GM13977 (cell line): ENCODE measurements at regions of chr10 and their contacts with region 1.

Region 1: DNA sequence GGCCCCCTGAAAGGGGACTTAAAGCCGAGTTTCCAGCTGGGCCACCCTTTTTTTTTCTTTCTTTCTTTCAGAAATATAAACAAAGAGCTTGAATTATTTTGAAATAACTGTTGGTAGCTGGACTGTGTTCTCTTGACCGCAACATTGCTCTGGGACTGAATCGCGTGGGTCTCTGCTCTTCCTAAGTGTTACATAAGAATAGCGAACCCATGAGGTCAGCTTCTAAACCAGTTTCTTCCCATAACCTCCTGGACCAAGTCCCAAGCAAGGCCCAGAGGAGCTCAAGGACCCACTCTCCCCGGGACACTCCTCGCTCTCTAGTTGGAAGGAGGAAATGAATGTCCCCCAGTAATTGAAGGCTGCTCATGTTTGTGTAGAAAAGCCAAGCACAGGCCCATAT is 91.1 kb downstream of the CXCL12 start:
- DNase-seq: no peak
- CTCF ChIP-seq: no peak

Region 2: GRCh38 chr10:42975558-42976340 is 1318.1 kb before region 1 on chr10:
- in situ Hi-C with region 1: no loop called
- DNase-seq: no peak
- CTCF ChIP-seq: no peak

Region 3: DNA sequence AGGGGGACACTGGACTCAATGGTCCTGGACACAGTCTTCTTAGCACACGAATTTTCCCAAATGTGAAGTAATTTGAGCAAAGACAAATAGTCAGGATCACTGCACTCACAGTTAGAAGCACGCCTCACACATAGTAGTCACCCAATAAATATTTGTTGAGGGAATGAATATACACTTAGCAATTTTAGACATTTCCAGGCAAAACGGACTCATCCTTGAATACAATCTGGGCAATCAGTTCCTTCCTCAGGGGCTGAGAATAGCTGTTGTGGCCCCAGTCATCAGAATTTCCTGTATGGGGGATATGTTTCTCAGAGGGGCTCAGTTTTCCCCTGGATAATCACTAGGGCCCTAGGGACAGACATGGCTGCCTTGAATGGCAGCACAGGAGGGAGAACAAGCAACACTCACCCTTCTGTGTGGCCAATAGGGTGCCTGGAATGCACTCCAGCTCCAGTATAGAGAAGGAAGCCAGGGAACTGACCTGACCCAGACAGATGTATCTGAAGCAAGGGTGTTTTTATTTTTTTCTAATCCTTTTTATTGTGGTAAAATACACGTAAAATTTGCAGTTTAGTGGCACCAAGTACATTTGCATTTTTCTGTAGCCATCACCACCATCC is 362.4 kb before region 1 on chr10:
- in situ Hi-C with region 1: no loop called
- DNase-seq: no peak
- CTCF ChIP-seq: no peak

Region 4: DNA sequence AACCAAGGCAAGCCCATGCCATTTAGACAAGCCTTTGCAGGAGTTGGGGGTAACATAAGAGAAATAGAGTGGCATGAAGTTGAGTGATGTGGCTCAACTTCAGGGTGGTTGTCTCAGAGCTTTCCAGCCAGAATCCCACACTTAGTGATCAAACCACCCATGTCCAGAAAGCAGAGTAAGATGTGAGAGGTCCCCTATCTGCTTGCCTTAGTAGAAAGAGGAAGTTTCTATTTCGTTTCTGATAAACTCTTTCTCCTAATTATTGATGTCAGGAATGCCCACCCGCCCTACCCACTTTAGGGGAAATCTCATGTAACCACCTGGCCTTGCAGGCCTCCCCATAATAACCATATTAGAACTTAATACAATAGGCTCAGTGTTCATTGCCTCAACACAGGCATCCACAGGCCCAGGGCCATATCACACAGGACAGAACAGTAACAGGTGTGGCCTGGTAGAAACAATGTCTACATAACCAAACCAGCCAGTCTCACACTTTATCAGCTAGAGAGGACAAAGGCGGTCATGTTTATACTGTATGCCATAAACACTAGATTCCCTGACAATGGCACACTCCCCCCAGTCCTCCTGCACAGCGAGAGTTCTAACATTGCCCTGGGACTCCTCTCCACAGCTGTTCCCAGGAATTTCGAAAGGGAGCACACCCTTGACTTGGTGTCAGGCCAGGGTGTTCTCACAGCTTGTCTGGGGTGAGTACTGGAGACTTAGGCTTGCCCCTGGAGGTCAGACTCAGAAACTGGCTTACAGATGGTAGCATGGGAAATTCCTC is 273.3 kb before region 1 on chr10:
- in situ Hi-C with region 1: no loop called
- DNase-seq: no peak
- CTCF ChIP-seq: no peak

Region 5: GRCh38 chr10:44167752-44168151 is 126.1 kb before region 1 on chr10:
- in situ Hi-C with region 1: no loop called
- DNase-seq: no peak
- CTCF ChIP-seq: no peak

Region 6: DNA sequence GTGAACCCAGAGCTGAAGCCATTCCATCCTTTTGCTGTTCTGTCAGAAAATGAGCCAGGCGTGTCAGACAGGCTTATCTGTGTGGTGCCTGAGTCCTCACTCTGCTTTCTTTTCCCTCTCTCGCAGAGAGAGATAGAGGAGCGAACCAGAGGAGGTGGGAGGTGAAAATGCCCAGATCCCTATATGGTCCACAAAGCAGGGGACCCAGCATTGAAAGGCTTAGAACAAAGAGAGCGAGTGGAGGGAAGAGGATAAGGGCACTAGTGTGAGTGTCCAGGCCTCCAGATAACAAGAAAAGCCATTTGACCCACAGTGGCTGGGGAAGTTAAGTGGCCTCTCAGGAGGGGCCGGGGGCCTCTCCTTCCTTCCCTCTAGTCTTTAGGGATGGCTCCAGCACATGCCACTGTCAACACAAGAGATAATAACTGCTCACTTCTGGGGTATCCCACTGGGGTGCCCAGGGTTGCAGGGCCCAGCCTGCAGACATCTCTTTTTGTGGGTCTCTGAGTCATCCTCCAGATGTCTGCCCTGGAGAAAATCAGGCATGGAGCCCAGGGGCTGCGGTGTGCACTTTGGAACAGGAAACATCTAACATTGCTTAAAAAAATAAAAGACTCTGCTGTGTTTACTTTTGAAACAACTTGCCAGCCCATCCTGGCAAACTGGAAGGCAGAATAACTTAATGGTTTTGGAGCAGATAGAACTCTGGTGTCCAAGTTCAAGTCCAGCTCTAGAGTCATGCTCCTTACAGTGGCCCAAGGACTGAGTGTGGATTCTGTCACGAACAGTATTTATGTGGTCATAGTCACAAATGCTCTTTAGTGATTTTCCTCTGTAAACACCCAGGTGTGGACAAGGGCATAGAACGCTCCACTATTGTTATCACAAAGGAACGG is 98.5 kb before region 1 on chr10:
- in situ Hi-C with region 1: loop called (anchors 25 kb)
- DNase-seq: no peak
- CTCF ChIP-seq: no peak